ENCODE measurements at regions of chr3 and their contacts with region 1.

Region 1: DNA sequence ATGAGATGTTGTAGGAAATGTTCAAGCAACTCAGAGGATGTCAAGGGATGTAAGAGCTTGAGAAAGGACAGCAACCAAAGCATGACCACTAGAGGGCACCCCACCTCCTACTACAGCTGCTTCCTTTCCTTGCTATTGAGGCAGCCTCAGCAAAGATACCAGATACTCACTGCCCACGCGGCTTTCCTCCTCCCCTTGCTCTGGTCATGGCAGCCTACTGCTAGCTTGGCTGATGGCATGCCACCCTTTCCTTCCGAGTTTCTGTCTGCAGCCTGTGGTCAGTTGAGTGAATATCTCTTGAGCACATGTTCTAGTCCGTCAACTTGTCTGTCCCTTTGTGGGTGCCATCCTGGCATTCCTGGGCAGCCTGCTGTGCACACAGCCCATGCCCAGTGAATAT is 4.4 kb upstream of the CXCR6 start:
- DNase-seq: peak; percentile 72 to 93 (median 82)
- ATAC-seq: peak; percentile 65
- H3K4me3 ChIP-seq: no peak overlapping the region
- H3K4me3 Mint-ChIP-seq: no peak overlapping the region
- H3K27ac ChIP-seq: no peak overlapping the region
- H3K27ac Mint-ChIP-seq: no peak overlapping the region
- H3K4me1 ChIP-seq: peaks cover 30% of the 10 kb centered on the region
- H3K4me1 Mint-ChIP-seq: peaks cover 37% of the 10 kb centered on the region
- H3K27me3 ChIP-seq: no peaks in the 10 kb centered on the region
- H3K27me3 Mint-ChIP-seq: no peaks in the 10 kb centered on the region
- CTCF ChIP-seq: peak; percentile 83

Region 2: DNA sequence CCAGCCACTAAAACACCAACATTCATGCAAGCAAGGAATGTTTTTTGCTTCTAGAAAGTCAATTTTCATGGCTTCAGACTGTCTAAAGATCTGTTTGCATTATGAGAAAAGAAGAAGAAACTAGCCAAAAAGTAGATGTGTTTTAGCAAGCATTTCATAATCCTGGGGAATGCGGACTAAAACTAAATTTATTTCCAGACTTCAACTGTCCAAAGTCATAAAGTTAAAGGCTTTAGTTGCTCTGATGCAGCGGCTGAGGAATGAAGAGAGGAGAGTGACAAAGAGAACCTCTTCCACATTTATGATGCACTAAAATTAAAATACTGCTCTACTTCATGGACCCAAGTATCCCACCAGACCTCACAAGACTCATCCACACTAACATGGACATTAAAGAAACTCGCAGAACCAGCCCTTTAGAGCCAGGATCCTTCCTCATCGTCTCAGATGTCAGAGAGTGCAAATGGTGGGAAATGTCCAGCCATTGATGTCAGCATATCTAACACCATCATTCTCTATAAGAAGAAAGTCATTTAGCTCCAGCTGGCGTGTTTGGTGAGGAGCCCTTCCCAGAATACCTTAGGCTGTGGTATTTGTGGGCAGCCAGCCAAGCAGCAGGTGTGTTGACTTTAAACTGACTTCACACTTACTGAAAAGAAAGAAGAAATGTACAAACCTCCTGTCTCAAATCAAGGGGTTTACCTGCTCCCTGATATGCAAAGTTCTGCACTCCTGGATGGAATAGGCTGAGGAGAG is 39.3 kb after region 1 on chr3:
- CTCF ChIA-PET with region 1: interaction called, 9 read pairs
- POLR2A ChIA-PET with region 1: interaction called, 11 read pairs
- intact Hi-C with region 1: loop called (anchors 5 kb)
- DNase-seq: peak in 13 of 14 experiments; percentile 35 to 74 (median 46)
- ATAC-seq: peak; percentile 17
- H3K4me3 ChIP-seq: no peak overlapping the region
- H3K4me3 Mint-ChIP-seq: peak overlapping the region; percentile 81
- H3K27ac ChIP-seq: peak overlapping the region in 1 of 2 donors; percentile 8
- H3K27ac Mint-ChIP-seq: peak overlapping the region; percentile 96
- H3K4me1 ChIP-seq: peaks cover 77% of the 10 kb centered on the region
- H3K4me1 Mint-ChIP-seq: peaks cover 68% of the 10 kb centered on the region
- H3K27me3 ChIP-seq: no peaks in the 10 kb centered on the region
- H3K27me3 Mint-ChIP-seq: no peaks in the 10 kb centered on the region
- CTCF ChIP-seq: no peak

Region 3: DNA sequence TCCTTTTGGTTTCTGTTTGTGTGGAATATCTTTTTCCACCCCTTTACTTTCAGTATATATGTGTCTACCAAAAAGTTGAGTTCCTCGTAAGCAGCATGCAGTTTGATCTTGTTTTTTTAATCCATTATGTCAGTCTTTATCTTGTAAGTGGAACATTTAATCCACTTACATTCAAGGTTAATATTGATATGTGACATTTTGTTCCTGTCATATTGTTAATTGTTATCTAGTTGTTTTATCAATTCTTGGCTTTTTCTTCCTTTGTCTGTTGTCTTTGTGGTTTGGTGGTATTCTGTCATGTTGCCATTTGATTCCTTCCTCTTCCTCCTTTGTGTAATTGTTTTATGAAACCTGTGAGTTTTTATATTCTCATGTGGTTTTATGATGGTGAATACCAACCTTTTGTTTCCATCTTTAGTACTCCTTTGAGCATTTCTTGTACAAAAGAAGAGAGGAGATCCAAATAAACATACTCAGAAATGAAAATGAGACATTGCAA is 131.8 kb after region 1 on chr3:
- CTCF ChIA-PET with region 1: interaction called, 96 read pairs
- POLR2A ChIA-PET with region 1: interaction called, 11 read pairs
- intact Hi-C with region 1: no loop called
- DNase-seq: peak in 3 of 14 experiments; percentile 48 to 63 (median 51)
- ATAC-seq: peak; percentile 10
- H3K4me3 ChIP-seq: no peak overlapping the region
- H3K4me3 Mint-ChIP-seq: peak overlapping the region; percentile 0
- H3K27ac ChIP-seq: peak overlapping the region in 1 of 2 donors; percentile 20
- H3K27ac Mint-ChIP-seq: peak overlapping the region; percentile 9
- H3K4me1 ChIP-seq: peaks cover 30% of the 10 kb centered on the region
- H3K4me1 Mint-ChIP-seq: peaks cover 62% of the 10 kb centered on the region
- H3K27me3 ChIP-seq: no peaks in the 10 kb centered on the region
- H3K27me3 Mint-ChIP-seq: no peaks in the 10 kb centered on the region
- CTCF ChIP-seq: no peak

Region 4: DNA sequence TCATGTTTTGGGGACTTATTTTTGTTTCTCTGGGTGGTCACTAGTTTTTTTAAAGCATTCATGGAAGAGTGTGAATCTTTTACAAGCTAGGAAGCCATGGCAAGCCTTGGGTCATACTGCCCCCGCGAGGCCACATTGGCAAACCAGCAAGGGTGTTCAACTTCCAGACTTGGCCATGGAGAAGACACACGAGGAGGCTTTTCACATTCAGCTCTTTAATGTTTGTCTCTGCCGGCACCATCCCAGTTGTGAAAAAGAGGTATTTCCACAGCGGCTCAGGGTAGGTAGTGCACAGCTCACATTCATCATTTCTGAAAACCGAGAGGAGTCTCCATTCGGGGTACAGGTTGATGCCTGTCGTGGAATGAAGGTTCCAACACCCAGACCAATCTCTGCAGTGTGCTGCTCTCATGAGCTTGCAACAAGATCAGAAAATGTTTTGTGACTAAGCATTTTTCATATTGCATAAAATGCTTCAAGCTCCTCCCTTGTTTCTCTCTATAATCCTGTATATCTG is 439.6 kb after region 1 on chr3:
- CTCF ChIA-PET with region 1: interaction called, 6 read pairs
- POLR2A ChIA-PET with region 1: no interaction called
- intact Hi-C with region 1: loop called in 1 of 2 experiments (anchors 5 kb)
- DNase-seq: peak; percentile 37 to 77 (median 54)
- ATAC-seq: peak; percentile 54
- H3K4me3 ChIP-seq: no peak overlapping the region
- H3K4me3 Mint-ChIP-seq: no peak overlapping the region
- H3K27ac ChIP-seq: no peak overlapping the region
- H3K27ac Mint-ChIP-seq: no peak overlapping the region
- H3K4me1 ChIP-seq: peaks cover 43% of the 10 kb centered on the region
- H3K4me1 Mint-ChIP-seq: peaks cover 36% of the 10 kb centered on the region
- H3K27me3 ChIP-seq: no peaks in the 10 kb centered on the region
- H3K27me3 Mint-ChIP-seq: no peaks in the 10 kb centered on the region
- CTCF ChIP-seq: peak; percentile 65

Region 5: DNA sequence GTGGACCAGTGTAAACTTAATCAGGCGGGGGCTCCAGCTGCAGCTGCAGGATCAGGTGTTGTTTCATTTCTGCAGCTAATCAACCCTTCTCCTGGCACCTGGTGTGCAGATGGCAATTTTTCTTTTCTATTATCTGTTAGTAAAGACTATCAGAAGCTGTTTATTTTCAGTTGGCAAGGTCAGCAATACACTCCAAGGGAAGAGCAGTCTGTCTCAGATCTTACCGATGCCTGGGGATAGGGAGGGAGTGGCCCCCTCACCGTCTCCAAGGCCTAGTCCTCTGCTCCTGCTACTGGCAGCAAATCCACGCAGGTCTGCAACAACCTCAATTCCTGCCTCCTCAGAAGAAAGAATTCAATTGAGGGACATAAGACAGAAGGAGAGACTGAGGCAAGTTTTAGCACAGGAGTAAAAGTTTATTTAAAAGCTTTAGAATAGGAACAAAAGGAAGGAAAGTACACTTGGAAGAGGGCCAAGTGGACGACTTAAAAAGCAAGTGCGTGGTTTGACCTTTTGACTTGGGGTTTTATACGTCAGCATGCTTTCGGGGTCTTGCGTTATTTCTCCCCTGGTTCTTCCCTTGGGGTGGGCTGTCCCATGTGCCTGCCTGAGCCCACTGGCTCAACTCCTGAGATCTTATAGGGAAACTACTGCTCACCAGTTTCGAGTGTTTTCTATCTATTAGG is 477.4 kb after region 1 on chr3:
- CTCF ChIA-PET with region 1: no interaction called
- POLR2A ChIA-PET with region 1: no interaction called
- intact Hi-C with region 1: no loop called
- DNase-seq: no peak
- ATAC-seq: no peak
- H3K4me3 ChIP-seq: no peak overlapping the region
- H3K4me3 Mint-ChIP-seq: no peak overlapping the region
- H3K27ac ChIP-seq: no peak overlapping the region
- H3K27ac Mint-ChIP-seq: no peak overlapping the region
- H3K4me1 ChIP-seq: no peaks in the 10 kb centered on the region
- H3K4me1 Mint-ChIP-seq: no peaks in the 10 kb centered on the region
- H3K27me3 ChIP-seq: no peaks in the 10 kb centered on the region
- H3K27me3 Mint-ChIP-seq: no peaks in the 10 kb centered on the region
- CTCF ChIP-seq: no peak